ENCODE measurements at regions of chr17 and their contacts with region 1.

Region 1: GRCh38 chr17:51153210-51154072 is at the start of gene NME1:
- DNase-seq: peak; percentile 92 to 97
- ATAC-seq: peak; percentile 93 to 95 (median 94)
- H3K4me3 ChIP-seq: peak within 1 kb of the TSS; percentile 88
- H3K27ac ChIP-seq: peak within 1 kb of the TSS; percentile 83
- H3K4me1 ChIP-seq: peaks cover 5% of the 10 kb centered on the region
- H3K27me3 ChIP-seq: no peaks in the 10 kb centered on the region
- CTCF ChIP-seq: peak; percentile 76
- total RNA-seq, gene NME1: 29.3 to 75.0 (median 50.9) TPM

Region 2: GRCh38 chr17:51166197-51166986 is 13.0 kb after region 1 on chr17 and contains the start of gene NME2:
- intact Hi-C with region 1: loop called in 1 of 2 experiments (anchors 1 kb)
- DNase-seq: peak; percentile 92 to 96
- ATAC-seq: peak; percentile 92 to 93 (median 92)
- H3K4me3 ChIP-seq: peak within 1 kb of the TSS; percentile 99
- H3K27ac ChIP-seq: peak within 1 kb of the TSS; percentile 100
- H3K4me1 ChIP-seq: peaks cover 16% of the 10 kb centered on the region
- H3K27me3 ChIP-seq: no peaks in the 10 kb centered on the region
- CTCF ChIP-seq: no peak
- total RNA-seq, gene NME2: 334 to 550 (median 422) TPM